Common myeloid progenitor, CD34-positive (primary cell): ENCODE measurements at regions of chr10 and their contacts with region 1.

Region 1: GRCh38 chr10:60964257-60965235 is 20.6 kb upstream of the RHOBTB1 start:
- DNase-seq: peak; percentile 63 to 81 (median 72)
- H3K4me3 ChIP-seq: no peak overlapping the region
- H3K27ac ChIP-seq: no peak overlapping the region
- H3K4me1 ChIP-seq: peaks cover 0 to 11% (median under 1%) of the 10 kb centered on the region in 4 experiments
- H3K27me3 ChIP-seq: no peaks in the 10 kb centered on the region

Region 2: GRCh38 chr10:60820093-60820754 is 144.3 kb before region 1 on chr10:
- CTCF ChIA-PET with region 1: interaction called, 10 read pairs
- POLR2A ChIA-PET with region 1: no interaction called
- DNase-seq: peak; percentile 34 to 60 (median 57)
- H3K4me3 ChIP-seq: no peak overlapping the region
- H3K27ac ChIP-seq: no peak overlapping the region
- H3K4me1 ChIP-seq: peaks cover 0 to 11% (median 8%) of the 10 kb centered on the region in 4 experiments
- H3K27me3 ChIP-seq: no peaks in the 10 kb centered on the region

Region 3: GRCh38 chr10:60937784-60938654 is 26.5 kb before region 1 on chr10:
- CTCF ChIA-PET with region 1: no interaction called
- POLR2A ChIA-PET with region 1: no interaction called
- DNase-seq: no peak
- H3K4me3 ChIP-seq: no peak overlapping the region
- H3K27ac ChIP-seq: no peak overlapping the region
- H3K4me1 ChIP-seq: peaks cover 2 to 14% (median 8%) of the 10 kb centered on the region in 4 experiments
- H3K27me3 ChIP-seq: no peaks in the 10 kb centered on the region

Region 4: DNA sequence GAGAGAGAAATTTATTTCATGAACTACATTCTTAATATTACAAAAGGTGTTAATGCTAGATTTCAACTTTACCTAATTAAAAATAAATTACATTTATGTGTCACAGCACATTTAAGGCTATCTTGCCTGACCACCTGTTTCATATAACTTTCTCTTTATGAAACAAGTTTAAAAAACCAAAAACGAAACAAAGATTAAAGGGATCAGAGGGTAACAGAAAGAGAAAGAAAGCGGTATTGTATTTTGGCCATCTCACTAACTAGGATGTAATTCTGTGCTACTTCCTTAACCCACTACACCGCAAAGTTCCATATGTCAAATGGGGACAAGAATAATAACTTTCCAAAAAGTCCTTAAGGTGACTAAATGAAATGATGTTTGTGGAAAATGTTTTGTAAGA is 14.2 kb before region 1 on chr10:
- CTCF ChIA-PET with region 1: interaction called, 21 read pairs
- POLR2A ChIA-PET with region 1: no interaction called
- DNase-seq: peak in 2 of 3 donors; percentile 57 to 80
- H3K4me3 ChIP-seq: peak overlapping the region in 1 of 7 experiments; percentile 13
- H3K27ac ChIP-seq: no peak overlapping the region
- H3K4me1 ChIP-seq: peaks cover 0 to 6% (median 0%) of the 10 kb centered on the region in 4 experiments
- H3K27me3 ChIP-seq: peaks cover 0 to 1% (median 0%) of the 10 kb centered on the region in 5 experiments

Region 5: DNA sequence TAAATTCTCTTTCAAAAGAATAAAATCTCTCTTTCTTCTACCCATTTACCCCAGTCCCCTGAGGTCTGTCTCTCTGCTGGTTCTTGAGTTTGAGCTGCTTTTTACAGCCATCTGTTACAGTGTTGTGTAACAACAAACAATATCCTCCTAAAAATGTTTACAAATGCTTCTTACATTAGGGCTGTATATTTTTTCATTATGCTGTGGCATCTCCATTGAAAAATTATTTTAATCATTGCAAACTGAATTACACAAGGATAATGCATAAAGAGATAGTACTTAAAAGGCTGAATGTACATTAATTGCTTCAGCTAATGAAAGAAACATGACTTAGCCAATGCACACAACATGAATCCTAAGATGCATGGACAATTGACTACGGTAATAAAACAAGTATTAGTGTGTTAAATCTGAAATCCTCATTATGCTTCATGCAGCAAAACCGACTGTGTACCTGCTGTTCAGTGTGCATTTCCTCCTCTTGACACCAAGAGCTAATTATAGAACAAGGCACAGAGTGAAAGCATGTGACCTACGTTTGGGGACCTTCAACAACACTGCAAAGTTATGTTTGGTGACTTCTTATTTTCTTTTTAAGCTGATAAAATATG is 161.1 kb after region 1 on chr10:
- CTCF ChIA-PET with region 1: no interaction called
- POLR2A ChIA-PET with region 1: no interaction called
- DNase-seq: peak in 2 of 3 donors; percentile 32 to 52
- H3K4me3 ChIP-seq: peak overlapping the region in 1 of 7 experiments; percentile 34
- H3K27ac ChIP-seq: no peak overlapping the region
- H3K4me1 ChIP-seq: peaks cover 9 to 26% (median 15%) of the 10 kb centered on the region in 4 experiments
- H3K27me3 ChIP-seq: no peaks in the 10 kb centered on the region